H1 (cell line): ENCODE measurements at regions of chr7 and their contacts with region 1.

Region 1: GRCh38 chr7:78039790-78040776 is 241.5 kb downstream of the PHTF2 start:
- DNase-seq: peak; percentile 51 to 95
- H3K4me3 ChIP-seq: no peak overlapping the region
- H3K27ac ChIP-seq: no peak overlapping the region
- H3K4me1 ChIP-seq: peaks cover 3 to 20% (median 13%) of the 10 kb centered on the region in 4 experiments; a peak in 5 of 7 replicates
- H3K27me3 ChIP-seq: no peaks in the 10 kb centered on the region
- CTCF ChIP-seq: peak; percentile 82 to 95 (median 95)
- EP300 ChIP-seq: no peak
- POLR2A ChIP-seq: no peak
- RAD21 ChIP-seq: peak; percentile 78 to 79

Region 2: DNA sequence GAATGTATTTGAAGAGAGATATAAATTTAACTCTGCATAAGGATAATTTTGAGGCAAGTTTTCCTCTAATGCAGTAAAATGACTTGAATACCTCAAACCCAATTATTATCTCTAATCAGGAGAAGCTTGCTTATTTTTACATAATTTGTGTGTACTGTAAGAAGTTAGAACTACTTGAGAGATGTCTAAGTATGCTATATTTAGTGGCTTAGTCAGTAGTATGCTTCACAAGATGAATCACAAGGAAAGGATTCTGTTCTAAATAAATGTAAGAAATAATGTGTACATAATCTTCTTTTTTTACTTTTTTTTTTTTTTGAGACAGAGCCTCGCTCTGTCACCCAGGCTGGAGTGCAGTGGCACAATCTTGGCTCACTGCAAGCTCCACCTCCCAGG is 227.8 kb before region 1 on chr7:
- CTCF ChIA-PET with region 1: no interaction called
- POLR2A ChIA-PET with region 1: no interaction called
- DNase-seq: no peak
- H3K4me3 ChIP-seq: no peak overlapping the region
- H3K27ac ChIP-seq: no peak overlapping the region
- H3K4me1 ChIP-seq: no peaks in the 10 kb centered on the region
- H3K27me3 ChIP-seq: no peaks in the 10 kb centered on the region
- CTCF ChIP-seq: no peak
- EP300 ChIP-seq: no peak
- POLR2A ChIP-seq: no peak
- RAD21 ChIP-seq: no peak

Region 3: DNA sequence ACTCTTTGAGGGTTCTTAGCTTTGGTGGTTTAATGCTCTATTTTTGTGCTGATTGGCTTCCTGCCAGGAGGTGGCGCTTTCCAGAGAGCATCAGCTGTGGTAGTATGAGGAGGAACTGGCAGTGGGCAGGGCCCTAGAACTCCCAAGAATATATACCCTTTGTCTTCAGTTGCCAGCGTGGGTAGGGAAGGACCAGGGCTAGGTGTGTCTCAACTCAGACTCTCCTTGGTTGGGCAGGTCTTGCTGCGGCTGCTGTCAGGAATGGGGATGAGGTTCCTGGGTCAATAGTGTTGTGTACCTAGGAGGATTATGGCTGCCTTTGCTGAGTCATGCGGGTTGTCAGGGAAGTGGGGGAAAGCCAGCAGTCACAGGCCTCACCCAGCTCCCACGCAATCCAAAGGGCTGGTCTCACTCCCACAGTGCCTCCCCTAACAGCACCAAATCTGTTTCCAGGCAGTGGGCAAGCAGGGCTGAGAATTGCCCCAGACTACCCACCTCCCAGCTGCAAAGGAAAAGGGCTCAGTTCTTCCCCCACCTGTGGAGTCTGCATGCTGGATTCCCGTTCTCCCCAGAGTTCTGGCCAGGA is 50.0 kb before region 1 on chr7:
- CTCF ChIA-PET with region 1: interaction called, 39 read pairs
- POLR2A ChIA-PET with region 1: no interaction called
- DNase-seq: peak in 1 of 2 experiments; percentile 81
- H3K4me3 ChIP-seq: no peak overlapping the region
- H3K27ac ChIP-seq: no peak overlapping the region
- H3K4me1 ChIP-seq: peaks cover 3 to 6% (median 4%) of the 10 kb centered on the region in 4 experiments; a peak in 6 of 7 replicates
- H3K27me3 ChIP-seq: no peaks in the 10 kb centered on the region
- CTCF ChIP-seq: peak; percentile 50 to 63 (median 62)
- EP300 ChIP-seq: no peak
- POLR2A ChIP-seq: no peak
- RAD21 ChIP-seq: peak; percentile 57 to 60

Region 4: DNA sequence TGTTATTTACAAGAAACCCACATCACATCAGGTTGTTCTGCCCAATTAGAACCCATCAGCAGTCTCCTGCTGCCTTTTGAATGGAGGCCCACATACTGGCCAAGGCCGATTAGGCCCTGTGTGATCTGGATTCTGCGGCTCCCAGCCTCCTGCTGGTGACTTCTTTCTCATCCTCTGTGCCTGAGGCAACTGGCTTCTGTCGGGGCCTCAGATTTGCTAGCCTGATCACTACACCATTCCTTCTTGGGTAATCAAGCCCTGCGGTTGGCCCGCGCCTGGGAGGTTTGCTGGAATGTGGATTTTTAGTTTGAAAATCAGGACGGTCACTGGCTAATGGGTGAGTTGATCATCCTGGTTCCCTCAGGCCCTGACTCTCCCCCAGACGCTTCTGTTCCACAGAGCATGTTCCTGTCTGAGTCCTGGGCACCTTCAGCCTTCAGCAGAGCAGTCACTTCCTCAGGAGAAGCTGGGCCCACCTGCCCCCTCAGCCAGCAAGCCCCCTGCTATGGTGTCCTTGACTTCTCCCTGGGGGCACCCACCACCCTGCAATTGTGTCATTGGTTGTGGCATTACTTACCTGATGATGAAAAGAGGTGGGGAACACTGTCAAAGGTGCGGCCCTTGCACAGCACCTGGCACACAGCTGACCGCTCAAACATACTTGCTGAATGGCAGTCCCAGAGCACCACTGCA is 33.9 kb before region 1 on chr7:
- CTCF ChIA-PET with region 1: interaction called, 13 read pairs
- POLR2A ChIA-PET with region 1: no interaction called
- DNase-seq: no peak
- H3K4me3 ChIP-seq: no peak overlapping the region
- H3K27ac ChIP-seq: no peak overlapping the region
- H3K4me1 ChIP-seq: no peaks in the 10 kb centered on the region
- H3K27me3 ChIP-seq: no peaks in the 10 kb centered on the region
- CTCF ChIP-seq: no peak
- EP300 ChIP-seq: no peak
- POLR2A ChIP-seq: no peak
- RAD21 ChIP-seq: peak in 1 of 2 experiments; percentile 26; a peak in 2 of 4 replicates

Region 5: DNA sequence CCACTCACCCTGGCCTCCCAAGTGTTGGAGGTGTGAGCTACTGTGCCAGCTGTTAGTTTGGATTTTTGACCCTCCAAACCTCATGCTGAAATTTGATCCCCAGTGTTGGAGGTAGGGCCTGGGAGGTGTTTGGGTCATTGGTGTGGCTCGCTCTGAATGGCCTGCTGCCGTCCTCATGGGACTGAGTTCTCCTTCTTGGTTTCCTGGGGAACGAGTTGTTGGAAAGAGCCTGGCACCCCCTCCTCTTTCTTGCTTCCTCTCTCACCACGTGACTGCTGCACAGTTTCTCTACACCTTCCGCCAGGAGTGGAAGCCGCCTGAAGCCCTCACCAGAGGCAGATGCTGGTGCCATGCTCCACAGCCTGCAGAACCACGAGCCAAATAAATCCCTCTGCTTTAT is 12.0 kb after region 1 on chr7:
- CTCF ChIA-PET with region 1: interaction called, 41 read pairs
- POLR2A ChIA-PET with region 1: interaction called, 3 read pairs
- DNase-seq: peak; percentile 46 to 65
- H3K4me3 ChIP-seq: no peak overlapping the region; a peak in 1 of 8 replicates
- H3K27ac ChIP-seq: no peak overlapping the region
- H3K4me1 ChIP-seq: peaks cover 0 to 4% (median 2%) of the 10 kb centered on the region in 4 experiments; a peak in 5 of 7 replicates
- H3K27me3 ChIP-seq: no peaks in the 10 kb centered on the region
- CTCF ChIP-seq: no peak
- EP300 ChIP-seq: no peak
- POLR2A ChIP-seq: no peak
- RAD21 ChIP-seq: no peak

Region 6: GRCh38 chr7:78080811-78081210 is 40.7 kb after region 1 on chr7:
- CTCF ChIA-PET with region 1: interaction called, 15 read pairs
- POLR2A ChIA-PET with region 1: no interaction called
- DNase-seq: no peak
- H3K4me3 ChIP-seq: no peak overlapping the region
- H3K27ac ChIP-seq: no peak overlapping the region
- H3K4me1 ChIP-seq: peaks cover 0 to 7% (median 2%) of the 10 kb centered on the region in 4 experiments; a peak in 2 of 7 replicates
- H3K27me3 ChIP-seq: peaks cover 0 to 8% (median 3%) of the 10 kb centered on the region in 4 experiments; a peak in 4 of 7 replicates
- CTCF ChIP-seq: no peak
- EP300 ChIP-seq: no peak
- POLR2A ChIP-seq: no peak
- RAD21 ChIP-seq: no peak

Region 7: DNA sequence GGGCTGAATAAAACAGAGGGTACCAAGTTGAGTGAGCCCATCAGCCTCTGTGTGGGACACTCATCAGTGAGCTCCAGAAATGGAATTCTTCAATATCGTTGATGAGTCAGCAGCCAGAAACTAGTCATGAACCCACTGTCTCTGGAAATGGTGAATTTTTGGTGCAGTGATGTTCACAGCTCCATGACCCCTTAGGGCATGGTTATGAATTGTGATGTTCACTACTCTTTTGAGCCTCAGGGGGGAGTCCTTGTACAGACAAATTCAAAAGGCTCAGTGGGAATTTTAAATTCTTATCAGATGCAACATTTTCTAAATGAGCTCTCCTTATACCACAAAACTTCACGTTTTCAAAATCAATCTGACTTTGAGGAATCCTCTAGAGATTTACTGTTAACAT is 94.2 kb after region 1 on chr7:
- CTCF ChIA-PET with region 1: no interaction called
- POLR2A ChIA-PET with region 1: no interaction called
- DNase-seq: no peak
- H3K4me3 ChIP-seq: no peak overlapping the region
- H3K27ac ChIP-seq: no peak overlapping the region
- H3K4me1 ChIP-seq: peaks cover 0 to 7% (median 0%) of the 10 kb centered on the region in 4 experiments; a peak in 3 of 7 replicates
- H3K27me3 ChIP-seq: no peaks in the 10 kb centered on the region
- CTCF ChIP-seq: peak in 2 of 3 experiments; percentile 53 to 61; a peak in 3 of 4 replicates
- EP300 ChIP-seq: no peak
- POLR2A ChIP-seq: no peak
- RAD21 ChIP-seq: peak; percentile 74 to 77